ENCODE measurements at regions of chr17 and their contacts with region 1.

Region 1: GRCh38 chr17:38922538-38923297 is 2.7 kb upstream of the LASP1NB start:
- DNase-seq: peak in 1 of 14 experiments; percentile 21
- ATAC-seq: no peak
- H3K4me3 ChIP-seq: no peak overlapping the region
- H3K4me3 Mint-ChIP-seq: no peak overlapping the region
- H3K27ac ChIP-seq: no peak overlapping the region
- H3K27ac Mint-ChIP-seq: peak overlapping the region; percentile 82
- H3K4me1 ChIP-seq: peaks cover 14% of the 10 kb centered on the region
- H3K4me1 Mint-ChIP-seq: peaks cover 37% of the 10 kb centered on the region
- H3K27me3 ChIP-seq: no peaks in the 10 kb centered on the region
- H3K27me3 Mint-ChIP-seq: no peaks in the 10 kb centered on the region
- CTCF ChIP-seq: no peak

Region 2: GRCh38 chr17:38879878-38880682 is 42.6 kb before region 1 on chr17:
- CTCF ChIA-PET with region 1: interaction called, 7 read pairs
- POLR2A ChIA-PET with region 1: interaction called, 3 read pairs
- intact Hi-C with region 1: loop called in 1 of 2 experiments (anchors 5 kb)
- DNase-seq: peak in 3 of 14 experiments; percentile 29 to 56 (median 51)
- ATAC-seq: peak; percentile 24
- H3K4me3 ChIP-seq: peak overlapping the region; percentile 28
- H3K4me3 Mint-ChIP-seq: peak overlapping the region; percentile 79
- H3K27ac ChIP-seq: peak overlapping the region; percentile 42 to 44
- H3K27ac Mint-ChIP-seq: peak overlapping the region; percentile 89
- H3K4me1 ChIP-seq: peaks cover 93% of the 10 kb centered on the region
- H3K4me1 Mint-ChIP-seq: peaks cover 87% of the 10 kb centered on the region
- H3K27me3 ChIP-seq: no peaks in the 10 kb centered on the region
- H3K27me3 Mint-ChIP-seq: no peaks in the 10 kb centered on the region
- CTCF ChIP-seq: no peak

Region 3: GRCh38 chr17:39001703-39002637 is 79.3 kb after region 1 on chr17:
- CTCF ChIA-PET with region 1: no interaction called
- POLR2A ChIA-PET with region 1: no interaction called
- intact Hi-C with region 1: no loop called
- DNase-seq: peak in 2 of 14 experiments; percentile 29 to 48
- ATAC-seq: no peak
- H3K4me3 ChIP-seq: no peak overlapping the region
- H3K4me3 Mint-ChIP-seq: no peak overlapping the region
- H3K27ac ChIP-seq: no peak overlapping the region
- H3K27ac Mint-ChIP-seq: peak overlapping the region; percentile 22
- H3K4me1 ChIP-seq: peaks cover 21% of the 10 kb centered on the region
- H3K4me1 Mint-ChIP-seq: peaks cover 33% of the 10 kb centered on the region
- H3K27me3 ChIP-seq: no peaks in the 10 kb centered on the region
- H3K27me3 Mint-ChIP-seq: no peaks in the 10 kb centered on the region
- CTCF ChIP-seq: no peak

Region 4: DNA sequence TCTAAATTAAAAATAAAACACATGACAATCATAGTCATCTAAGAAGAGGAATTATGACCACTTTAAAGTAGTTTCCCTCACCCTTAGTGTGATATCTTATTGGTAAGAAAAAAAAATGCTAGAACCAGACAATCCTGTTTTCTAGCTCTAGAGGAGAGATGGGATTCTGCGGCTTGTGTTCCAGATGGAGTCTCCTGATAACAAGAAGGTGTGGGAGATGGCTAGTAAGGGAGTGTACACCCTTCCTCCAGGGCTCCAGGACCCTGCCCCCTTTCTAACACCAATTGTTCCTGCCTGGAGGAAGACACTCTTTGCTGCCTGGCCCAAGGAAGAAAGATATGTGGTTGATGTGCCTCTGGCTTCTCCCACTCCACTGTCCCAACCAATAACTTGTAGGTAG is 113.3 kb after region 1 on chr17:
- CTCF ChIA-PET with region 1: no interaction called
- POLR2A ChIA-PET with region 1: no interaction called
- intact Hi-C with region 1: no loop called
- DNase-seq: no peak
- ATAC-seq: no peak
- H3K4me3 ChIP-seq: no peak overlapping the region
- H3K4me3 Mint-ChIP-seq: no peak overlapping the region
- H3K27ac ChIP-seq: no peak overlapping the region
- H3K27ac Mint-ChIP-seq: no peak overlapping the region
- H3K4me1 ChIP-seq: no peaks in the 10 kb centered on the region
- H3K4me1 Mint-ChIP-seq: no peaks in the 10 kb centered on the region
- H3K27me3 ChIP-seq: no peaks in the 10 kb centered on the region
- H3K27me3 Mint-ChIP-seq: peaks cover 9% of the 10 kb centered on the region
- CTCF ChIP-seq: no peak

Measured in CD4-positive, alpha-beta T cell (primary cell).